HEK293 (cell line): ENCODE measurements at regions of chr18 and their contacts with region 1.

Region 1: DNA sequence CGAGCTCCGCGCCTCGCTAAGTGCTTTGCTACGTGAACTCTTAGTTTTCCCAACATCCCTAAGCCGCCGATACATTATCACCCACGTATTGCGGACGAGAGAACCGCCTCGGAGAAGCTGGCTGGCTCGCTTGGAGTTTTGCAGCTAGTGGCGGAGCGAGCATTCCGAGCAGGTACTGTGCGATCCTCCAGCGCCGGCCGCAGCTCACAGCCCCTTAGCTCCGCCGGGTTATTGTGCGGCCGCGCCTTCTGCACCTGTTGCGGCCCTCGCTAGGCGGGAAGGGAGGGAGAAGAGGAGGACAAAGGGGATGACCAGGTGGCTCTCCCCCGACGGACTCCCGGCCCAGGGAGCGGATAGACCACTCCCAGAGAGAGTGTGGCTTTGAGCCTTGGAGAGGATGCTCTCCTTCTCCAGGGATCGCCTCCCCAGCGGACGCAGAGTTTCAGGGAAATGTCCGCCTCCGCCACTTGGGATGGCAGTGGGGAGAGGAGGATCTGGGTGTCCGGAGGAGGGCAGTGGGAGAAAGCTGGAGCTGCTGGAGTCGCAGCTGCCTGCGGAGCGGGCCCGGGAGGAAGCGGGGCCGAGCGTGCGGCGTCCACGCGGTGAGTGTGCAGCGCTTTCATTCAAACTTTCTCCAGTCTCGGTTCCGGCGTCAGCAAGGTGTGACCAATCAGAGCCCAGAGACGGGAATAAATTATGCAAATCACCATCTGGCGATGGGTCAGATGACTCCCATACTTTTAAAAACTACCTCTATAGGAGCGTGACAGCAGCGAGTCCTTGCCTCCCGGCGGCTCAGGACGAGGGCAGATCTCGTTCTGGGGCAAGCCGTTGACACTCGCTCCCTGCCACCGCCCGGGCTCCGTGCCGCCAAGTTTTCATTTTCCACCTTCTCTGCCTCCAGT is at the start of gene LIPG:
- H3K4me3 ChIP-seq: peak within 1 kb of the TSS; percentile 23
- H3K27ac ChIP-seq: peak within 1 kb of the TSS; percentile 64; the same call in 1 of the 2 replicates
- H3K4me1 ChIP-seq: peaks cover 9% of the 10 kb centered on the region; the same call in 1 of the 2 replicates
- CTCF ChIP-seq: peak; percentile 50

Region 2: DNA sequence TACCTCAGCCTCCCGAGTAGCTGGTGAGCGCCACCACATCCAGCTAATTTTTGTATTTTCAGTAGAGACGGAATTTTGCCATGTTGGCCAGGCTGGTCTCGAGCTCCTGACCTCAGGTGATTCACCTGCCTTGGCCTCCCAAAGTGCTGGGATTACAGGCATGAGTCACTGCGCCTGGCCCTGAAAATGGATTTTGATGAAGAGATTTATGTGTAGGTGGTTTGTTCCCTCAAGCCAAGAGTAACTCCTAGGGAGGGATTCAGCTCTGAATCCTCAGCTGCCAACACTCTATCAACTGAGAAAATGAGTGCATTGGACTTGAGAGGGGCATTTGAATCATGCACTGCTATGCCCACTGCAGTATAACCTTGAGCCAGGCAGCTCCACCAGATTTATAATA is 17.2 kb before region 1 on chr18:
- CTCF ChIA-PET with region 1: interaction called, 10 read pairs
- POLR2A ChIA-PET with region 1: interaction called, 4 read pairs
- H3K4me3 ChIP-seq: no peak overlapping the region
- H3K27ac ChIP-seq: no peak overlapping the region
- H3K4me1 ChIP-seq: peaks cover 5% of the 10 kb centered on the region; the same call in 1 of the 2 replicates
- CTCF ChIP-seq: no peak

Region 3: GRCh38 chr18:49728542-49728941 is 167.0 kb after region 1 on chr18:
- CTCF ChIA-PET with region 1: interaction called, 51 read pairs
- POLR2A ChIA-PET with region 1: interaction called, 9 read pairs
- H3K4me3 ChIP-seq: no peak overlapping the region
- H3K27ac ChIP-seq: no peak overlapping the region
- H3K4me1 ChIP-seq: peaks cover 19% of the 10 kb centered on the region
- CTCF ChIP-seq: peak; percentile 46; the same call in 1 of the 2 replicates

Region 4: GRCh38 chr18:49768051-49768391 is 206.5 kb after region 1 on chr18:
- CTCF ChIA-PET with region 1: interaction called, 40 read pairs
- POLR2A ChIA-PET with region 1: no interaction called
- H3K4me3 ChIP-seq: no peak overlapping the region
- H3K27ac ChIP-seq: no peak overlapping the region
- H3K4me1 ChIP-seq: no peaks in the 10 kb centered on the region
- CTCF ChIP-seq: peak; percentile 58

Region 5: GRCh38 chr18:49813319-49814146 is 252.0 kb after region 1 on chr18 and contains the start of gene ACAA2:
- CTCF ChIA-PET with region 1: interaction called, 5 read pairs
- POLR2A ChIA-PET with region 1: interaction called, 10 read pairs
- H3K4me3 ChIP-seq: peak within 1 kb of the TSS; percentile 76
- H3K27ac ChIP-seq: peak within 1 kb of the TSS; percentile 96
- H3K4me1 ChIP-seq: peaks cover 22% of the 10 kb centered on the region
- CTCF ChIP-seq: no peak